OCI-LY7 (cell line): ENCODE measurements at regions of chr11 and their contacts with region 1.

Region 1: GRCh38 chr11:121572571-121573059 is 119.8 kb upstream of the SORL1-AS1 start:
- DNase-seq: no peak
- H3K4me3 ChIP-seq: no peak overlapping the region
- H3K27ac ChIP-seq: peak overlapping the region; percentile 97
- H3K4me1 ChIP-seq: peaks cover 59% of the 10 kb centered on the region
- CTCF ChIP-seq: no peak

Region 2: DNA sequence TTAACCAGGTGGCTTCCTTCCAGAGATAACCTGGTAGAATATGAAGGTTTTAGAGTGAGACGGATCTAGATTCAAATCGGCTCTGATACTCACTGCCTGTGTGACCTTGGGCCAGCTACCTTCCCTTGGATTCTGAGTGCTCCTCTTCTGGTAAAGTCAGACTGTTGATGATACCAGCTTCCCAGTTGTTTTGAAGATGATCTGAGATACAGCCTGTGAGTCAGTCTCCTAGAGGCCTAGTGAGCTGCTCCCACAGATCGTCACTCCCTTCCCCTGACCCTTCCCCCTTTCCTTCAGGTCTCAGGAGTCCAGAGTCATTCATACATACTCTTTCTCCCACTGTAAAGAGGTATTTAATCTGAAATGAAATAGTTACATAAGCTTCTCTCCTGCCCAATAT is 853.3 kb before region 1 on chr11:
- CTCF ChIA-PET with region 1: no interaction called
- POLR2A ChIA-PET with region 1: no interaction called
- intact Hi-C with region 1: no loop called
- DNase-seq: no peak
- H3K4me3 ChIP-seq: no peak overlapping the region
- H3K27ac ChIP-seq: no peak overlapping the region
- H3K4me1 ChIP-seq: peaks cover 16% of the 10 kb centered on the region
- CTCF ChIP-seq: no peak

Region 3: GRCh38 chr11:121473064-121473777 is 99.4 kb before region 1 on chr11:
- CTCF ChIA-PET with region 1: no interaction called
- POLR2A ChIA-PET with region 1: no interaction called
- intact Hi-C with region 1: no loop called
- DNase-seq: no peak
- H3K4me3 ChIP-seq: no peak overlapping the region
- H3K27ac ChIP-seq: no peak overlapping the region
- H3K4me1 ChIP-seq: peaks cover 15% of the 10 kb centered on the region
- CTCF ChIP-seq: no peak

Region 4: DNA sequence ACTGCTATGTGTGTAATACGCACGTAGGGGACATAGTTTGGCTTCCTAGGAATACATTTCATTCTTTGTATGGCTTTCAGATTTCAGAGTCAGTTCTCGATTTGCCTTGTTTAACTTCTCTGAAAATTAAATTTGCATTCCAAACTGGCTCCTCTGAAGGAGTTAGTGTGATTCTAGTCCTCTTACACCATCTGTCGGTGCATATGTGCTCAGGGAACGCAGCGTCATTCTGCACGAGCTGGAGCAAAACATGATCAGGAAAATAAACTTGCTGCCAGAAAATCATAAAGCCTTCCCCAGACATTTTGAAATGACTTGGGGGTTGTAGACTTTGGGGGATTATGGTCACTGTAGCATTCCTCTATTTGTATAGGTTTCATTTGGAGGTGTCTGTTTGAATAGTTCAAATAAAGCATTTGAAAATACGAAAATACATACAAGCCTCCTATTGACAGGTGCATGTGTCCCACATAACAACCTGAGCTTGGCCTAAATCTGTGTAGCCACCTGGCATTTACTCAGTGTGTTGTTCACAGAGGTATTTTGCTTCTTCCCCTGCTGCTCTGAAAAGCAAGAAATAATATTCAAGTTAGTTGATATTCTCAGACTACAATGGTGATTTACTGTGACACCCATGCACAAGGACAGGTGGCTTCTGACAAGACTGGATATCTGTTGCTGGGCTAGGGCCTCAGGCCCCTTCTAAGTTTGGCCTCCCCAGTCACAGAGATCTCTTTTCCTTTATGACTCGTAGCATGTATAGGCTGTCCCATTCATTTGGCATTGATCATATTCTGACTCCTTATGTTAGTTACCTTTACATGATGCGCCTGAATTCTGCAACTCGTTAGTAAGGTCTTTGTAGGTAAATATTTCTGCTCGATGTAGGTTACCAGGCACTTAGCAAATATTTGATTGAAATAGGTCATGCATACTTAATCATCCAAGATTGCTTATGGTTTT is 38.2 kb before region 1 on chr11:
- CTCF ChIA-PET with region 1: no interaction called
- POLR2A ChIA-PET with region 1: no interaction called
- intact Hi-C with region 1: loop called (anchors 2 kb)
- DNase-seq: peak; percentile 68
- H3K4me3 ChIP-seq: peak overlapping the region; percentile 35
- H3K27ac ChIP-seq: peak overlapping the region; percentile 84
- H3K4me1 ChIP-seq: peaks cover 81% of the 10 kb centered on the region
- CTCF ChIP-seq: peak; percentile 69